ENCODE measurements at regions of chr1 and their contacts with region 1.

Region 1: DNA sequence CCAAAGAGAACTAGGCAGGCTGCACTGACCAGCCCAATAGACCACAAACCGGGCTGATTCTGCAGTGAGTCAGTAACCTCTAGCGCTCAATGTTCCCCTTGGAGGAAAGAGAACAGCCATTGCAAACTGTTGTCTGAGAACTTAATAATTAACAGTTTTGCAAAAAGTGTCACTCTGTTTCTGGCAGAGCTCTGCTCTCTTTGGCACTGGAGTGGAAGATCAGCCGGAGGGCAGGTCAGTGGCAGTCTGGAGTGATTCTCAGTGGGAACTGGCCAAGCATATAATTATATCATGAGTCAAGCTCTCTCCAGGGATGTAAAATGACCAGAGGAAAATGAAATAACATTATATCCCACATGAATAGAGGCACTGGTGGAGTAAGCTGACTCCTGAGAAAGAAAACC is 238.3 kb downstream of the HLX start:
- DNase-seq: peak; percentile 24 to 45
- ATAC-seq: peak; percentile 84 to 94 (median 90)
- H3K4me3 ChIP-seq: no peak overlapping the region
- H3K27ac ChIP-seq: peak overlapping the region; percentile 1 to 83 (median 66)
- H3K4me1 ChIP-seq: peaks cover 0 to 41% (median 23%) of the 10 kb centered on the region in 9 donors
- H3K27me3 ChIP-seq: no peaks in the 10 kb centered on the region
- CTCF ChIP-seq: no peak

Region 2: GRCh38 chr1:220943319-220943996 is 174.1 kb before region 1 on chr1:
- intact Hi-C with region 1: no loop called
- DNase-seq: no peak
- ATAC-seq: no peak
- H3K4me3 ChIP-seq: no peak overlapping the region
- H3K27ac ChIP-seq: no peak overlapping the region
- H3K4me1 ChIP-seq: no peaks in the 10 kb centered on the region
- H3K27me3 ChIP-seq: no peaks in the 10 kb centered on the region
- CTCF ChIP-seq: no peak

Region 3: GRCh38 chr1:221150996-221151395 is 33.4 kb after region 1 on chr1:
- intact Hi-C with region 1: loop called in 1 of 10 experiments (anchors 5 kb)
- DNase-seq: no peak
- ATAC-seq: no peak
- H3K4me3 ChIP-seq: no peak overlapping the region
- H3K27ac ChIP-seq: no peak overlapping the region
- H3K4me1 ChIP-seq: peaks cover 0 to 21% (median 9%) of the 10 kb centered on the region in 9 donors
- H3K27me3 ChIP-seq: no peaks in the 10 kb centered on the region
- CTCF ChIP-seq: no peak

Region 4: GRCh38 chr1:221161571-221162041 is 44.1 kb after region 1 on chr1:
- intact Hi-C with region 1: loop called in 1 of 10 experiments (anchors 5 kb)
- DNase-seq: no peak
- ATAC-seq: peak in 5 of 8 donors; percentile 17 to 55 (median 27)
- H3K4me3 ChIP-seq: no peak overlapping the region
- H3K27ac ChIP-seq: peak overlapping the region in 4 of 10 donors; percentile 12 to 63 (median 36)
- H3K4me1 ChIP-seq: peaks cover 0 to 74% (median 11%) of the 10 kb centered on the region in 9 donors
- H3K27me3 ChIP-seq: no peaks in the 10 kb centered on the region
- CTCF ChIP-seq: no peak